Heart right ventricle (tissue), 16 donors: ENCODE measurements at regions of chr17 and their contacts with region 1.

Region 1: GRCh38 chr17:76816590-76817135 is 51.5 kb upstream of the MGAT5B start:
- DNase-seq: no peak
- ATAC-seq: peak in 1 of 8 donors; percentile 51
- H3K4me3 ChIP-seq: no peak overlapping the region
- H3K27ac ChIP-seq: no peak overlapping the region
- H3K4me1 ChIP-seq: peaks cover 0 to 5% (median 0%) of the 10 kb centered on the region in 9 donors
- H3K27me3 ChIP-seq: peaks cover 0 to 17% (median 0%) of the 10 kb centered on the region in 7 donors
- CTCF ChIP-seq: peak in 7 of 9 donors; percentile 42 to 68 (median 58)

Region 2: GRCh38 chr17:76737082-76737675 is 79.5 kb before region 1 on chr17 and contains the start of gene SRSF2:
- intact Hi-C with region 1: no loop called
- DNase-seq: peak; percentile 98
- ATAC-seq: peak; percentile 88 to 96 (median 94)
- H3K4me3 ChIP-seq: peak within 1 kb of the TSS; percentile 84 to 98 (median 94)
- H3K27ac ChIP-seq: peak within 1 kb of the TSS; percentile 95 to 99 (median 99)
- H3K4me1 ChIP-seq: peaks cover 11 to 77% (median 64%) of the 10 kb centered on the region in 9 donors
- H3K27me3 ChIP-seq: no peaks in the 10 kb centered on the region
- CTCF ChIP-seq: no peak
- total RNA-seq, gene SRSF2: 58.8 to 103 (median 76.3) TPM

Region 3: GRCh38 chr17:76797241-76797840 is 19.3 kb before region 1 on chr17:
- intact Hi-C with region 1: loop called in 1 of 10 experiments (anchors 1 kb)
- DNase-seq: no peak
- ATAC-seq: no peak
- H3K4me3 ChIP-seq: no peak overlapping the region
- H3K27ac ChIP-seq: no peak overlapping the region
- H3K4me1 ChIP-seq: no peaks in the 10 kb centered on the region
- H3K27me3 ChIP-seq: no peaks in the 10 kb centered on the region
- CTCF ChIP-seq: no peak

Region 4: GRCh38 chr17:77054936-77055335 is 238.3 kb after region 1 on chr17:
- intact Hi-C with region 1: loop called in 1 of 10 experiments (anchors 5 kb)
- DNase-seq: no peak
- ATAC-seq: no peak
- H3K4me3 ChIP-seq: no peak overlapping the region
- H3K27ac ChIP-seq: no peak overlapping the region
- H3K4me1 ChIP-seq: no peaks in the 10 kb centered on the region
- H3K27me3 ChIP-seq: peaks cover 0 to 90% (median 69%) of the 10 kb centered on the region in 7 donors
- CTCF ChIP-seq: no peak

Region 5: DNA sequence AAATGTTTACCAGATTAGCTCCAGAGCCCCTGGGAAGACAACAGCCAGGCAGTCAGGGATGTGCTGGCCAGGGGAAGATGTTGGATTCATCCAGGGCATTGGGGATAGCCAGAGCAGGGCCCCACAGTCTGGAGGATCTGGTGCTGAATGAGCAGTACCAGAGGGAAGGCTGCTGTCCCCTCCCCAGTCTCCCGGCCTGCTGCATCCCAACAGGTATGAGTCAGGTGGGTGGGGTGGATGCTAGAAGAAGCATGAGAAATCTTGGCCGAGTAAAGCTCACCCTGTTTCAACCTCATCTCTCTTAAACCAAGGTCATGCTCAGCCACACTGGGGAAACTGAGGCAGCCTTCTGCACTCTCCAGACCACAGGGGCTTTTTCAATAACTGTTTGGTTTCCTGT is 252.3 kb after region 1 on chr17:
- intact Hi-C with region 1: loop called in 1 of 10 experiments (anchors 5 kb)
- DNase-seq: no peak
- ATAC-seq: no peak
- H3K4me3 ChIP-seq: no peak overlapping the region
- H3K27ac ChIP-seq: no peak overlapping the region
- H3K4me1 ChIP-seq: peaks cover 0 to 3% (median 0%) of the 10 kb centered on the region in 9 donors
- H3K27me3 ChIP-seq: peaks cover 0 to 65% (median 37%) of the 10 kb centered on the region in 7 donors
- CTCF ChIP-seq: no peak